PC-9 (cell line): ENCODE measurements at regions of chr5 and their contacts with region 1.

Region 1: DNA sequence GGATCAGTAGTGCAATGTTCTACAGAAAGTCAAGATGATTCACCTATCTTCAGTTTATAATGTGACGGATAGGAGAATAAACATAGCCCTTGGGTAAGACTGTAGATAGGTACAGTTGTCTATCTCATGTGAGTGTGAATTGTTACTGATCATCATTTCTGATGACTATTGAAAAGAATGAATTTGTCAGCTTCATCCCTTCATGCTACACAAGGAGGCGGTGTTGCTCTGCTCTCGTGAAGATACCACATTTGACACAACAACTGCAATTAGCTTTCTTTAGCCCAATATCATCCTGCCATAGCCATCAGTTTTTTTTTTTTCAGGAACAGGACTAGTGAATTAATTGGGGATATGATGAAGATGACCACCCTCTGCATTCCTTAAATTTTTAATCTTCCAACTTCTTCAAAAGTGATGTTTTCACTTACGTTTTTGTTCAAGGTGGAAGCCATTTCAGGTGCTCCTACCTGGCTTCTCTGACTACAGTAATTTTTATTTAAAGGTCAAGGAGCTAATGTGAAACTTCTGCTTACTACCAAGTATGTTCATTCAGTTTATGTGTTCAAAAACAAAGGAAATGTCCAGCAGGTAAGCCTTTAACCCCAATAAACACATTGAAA is 152.9 kb upstream of the MOCS2 start:
- DNase-seq: no peak
- H3K4me3 ChIP-seq: no peak overlapping the region
- H3K27ac ChIP-seq: no peak overlapping the region
- H3K4me1 ChIP-seq: no peaks in the 10 kb centered on the region
- H3K27me3 ChIP-seq: no peaks in the 10 kb centered on the region
- CTCF ChIP-seq: peak; percentile 69

Region 2: GRCh38 chr5:53425598-53426511 is 163.4 kb after region 1 on chr5:
- CTCF ChIA-PET with region 1: no interaction called
- POLR2A ChIA-PET with region 1: no interaction called
- intact Hi-C with region 1: loop called (anchors 5 kb)
- DNase-seq: no peak
- H3K4me3 ChIP-seq: no peak overlapping the region
- H3K27ac ChIP-seq: no peak overlapping the region
- H3K4me1 ChIP-seq: 0 out of 2 replicates have a peak, but pooled peaks cover 6% of the 10 kb centered on the region
- H3K27me3 ChIP-seq: no peaks in the 10 kb centered on the region
- CTCF ChIP-seq: peak; percentile 45

Region 3: DNA sequence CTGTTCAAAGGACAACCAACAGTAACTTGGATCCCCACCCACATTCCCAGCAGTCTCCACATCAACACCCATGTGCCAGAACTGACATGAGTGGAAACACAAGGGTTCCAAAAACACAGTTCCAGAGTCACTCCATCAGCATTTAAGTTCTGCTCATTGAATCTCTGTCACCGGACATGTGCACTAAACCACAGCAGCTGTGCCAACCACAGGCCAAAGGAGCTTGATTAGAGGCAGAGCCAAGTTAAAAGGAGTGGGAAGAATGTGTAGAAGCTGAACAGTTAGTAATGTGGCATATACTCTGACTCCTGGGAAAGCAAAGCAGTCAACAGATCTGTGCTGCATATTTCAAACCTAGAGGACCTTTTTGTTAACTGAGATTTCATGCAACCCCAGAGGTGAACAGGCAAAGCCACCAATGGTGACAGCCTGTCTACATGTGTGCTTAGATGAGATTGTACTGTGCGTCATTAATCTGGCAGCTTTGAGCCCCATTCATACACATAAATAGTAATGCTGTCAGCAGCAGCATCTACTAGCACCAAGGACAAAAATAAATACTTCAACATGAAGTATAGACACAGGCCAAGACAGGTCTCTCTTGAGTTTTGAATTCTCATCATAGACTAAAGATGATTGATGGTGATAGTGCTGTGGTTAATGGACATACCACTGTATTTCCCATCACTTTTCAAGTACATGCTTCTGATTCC is 201.6 kb after region 1 on chr5:
- CTCF ChIA-PET with region 1: no interaction called
- POLR2A ChIA-PET with region 1: interaction called, 10 read pairs
- intact Hi-C with region 1: no loop called
- DNase-seq: no peak
- H3K4me3 ChIP-seq: no peak overlapping the region
- H3K27ac ChIP-seq: no peak overlapping the region
- H3K4me1 ChIP-seq: peaks cover 2% of the 10 kb centered on the region; the same call in 1 of the 2 replicates
- H3K27me3 ChIP-seq: no peaks in the 10 kb centered on the region
- CTCF ChIP-seq: no peak

Region 4: GRCh38 chr5:53874409-53874808 is 612.0 kb after region 1 on chr5:
- CTCF ChIA-PET with region 1: no interaction called
- POLR2A ChIA-PET with region 1: no interaction called
- intact Hi-C with region 1: loop called (anchors 5 kb)
- DNase-seq: no peak
- H3K4me3 ChIP-seq: no peak overlapping the region
- H3K27ac ChIP-seq: no peak overlapping the region
- H3K4me1 ChIP-seq: no peaks in the 10 kb centered on the region
- H3K27me3 ChIP-seq: no peaks in the 10 kb centered on the region
- CTCF ChIP-seq: no peak

Region 5: DNA sequence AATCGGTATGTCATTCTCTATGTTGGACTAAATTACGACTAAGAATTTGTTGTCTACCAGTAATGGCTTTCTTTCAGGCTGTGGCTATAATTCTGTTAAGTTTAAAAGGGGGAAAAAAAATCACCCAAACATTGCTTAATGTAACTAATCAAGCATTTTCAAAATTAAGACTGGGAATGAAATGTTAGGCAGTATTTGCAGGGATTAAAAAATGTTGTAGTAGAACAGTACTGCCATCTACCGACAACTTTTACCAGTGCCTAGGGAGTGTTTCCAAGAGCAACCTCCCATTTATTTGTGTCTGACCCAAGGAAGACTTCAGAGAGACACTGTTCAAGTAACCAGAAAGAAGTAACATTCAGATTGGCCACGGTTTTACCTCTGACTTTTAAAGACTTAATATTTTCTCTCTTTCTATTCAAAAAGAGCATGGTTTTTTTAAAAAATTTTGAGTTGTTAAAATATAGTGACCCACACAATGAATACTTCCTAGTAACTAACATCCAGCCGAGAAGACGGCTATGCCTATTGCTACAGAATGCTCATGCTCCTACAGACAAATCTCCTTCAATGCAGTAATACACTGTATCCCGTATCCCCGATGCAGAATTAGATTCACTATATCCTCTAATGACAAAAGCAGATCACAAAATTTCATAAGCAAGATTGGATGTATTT is 955.5 kb after region 1 on chr5:
- CTCF ChIA-PET with region 1: no interaction called
- POLR2A ChIA-PET with region 1: no interaction called
- intact Hi-C with region 1: loop called (anchors 5 kb)
- DNase-seq: peak; percentile 2 to 44
- H3K4me3 ChIP-seq: no peak overlapping the region
- H3K27ac ChIP-seq: no peak overlapping the region
- H3K4me1 ChIP-seq: no peaks in the 10 kb centered on the region
- H3K27me3 ChIP-seq: no peaks in the 10 kb centered on the region
- CTCF ChIP-seq: peak; percentile 76